ENCODE measurements at regions of chr2 and their contacts with region 1.

Region 1: DNA sequence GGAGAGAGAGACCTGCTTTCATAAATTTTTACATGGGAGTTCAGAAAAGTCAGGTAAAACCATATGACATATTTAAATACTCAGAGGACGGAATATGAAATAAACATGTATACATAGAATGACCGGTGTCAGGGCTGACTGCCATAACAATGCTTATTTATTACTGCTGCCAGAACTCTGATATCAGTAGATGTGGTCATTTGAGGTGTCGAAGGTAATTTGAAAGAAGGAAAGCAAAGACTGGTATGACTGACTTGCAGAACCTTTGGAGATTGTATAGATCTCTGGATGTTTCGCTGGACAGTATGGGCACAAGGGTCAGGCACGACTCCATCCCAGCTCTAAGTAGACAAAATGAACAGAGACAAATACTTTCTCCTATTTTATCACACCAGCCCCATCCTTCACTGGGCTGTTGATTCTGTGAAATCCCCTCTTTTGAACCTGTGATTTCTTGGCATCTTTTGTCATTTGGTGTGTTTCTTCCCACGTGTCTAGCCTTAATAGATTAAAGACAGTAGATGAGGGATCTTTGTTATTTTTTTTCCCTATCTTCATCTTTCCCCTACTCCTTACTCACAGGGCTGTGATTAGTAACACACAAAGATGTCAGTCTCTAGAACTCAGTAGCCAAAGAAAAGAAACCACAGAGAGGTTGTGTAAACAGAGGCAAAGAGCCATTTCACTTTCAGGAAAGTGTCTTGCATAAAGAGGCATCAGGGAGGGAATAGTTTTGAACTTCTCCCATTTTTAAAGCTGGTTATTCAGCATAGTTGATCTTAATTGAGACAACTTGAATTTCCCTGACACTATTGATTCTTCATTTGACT is 61.6 kb downstream of the ICOS start:
- DNase-seq: peak in 1 of 9 experiments; percentile 25
- ATAC-seq: no peak
- H3K4me3 ChIP-seq: no peak overlapping the region
- H3K4me3 Mint-ChIP-seq: no peak overlapping the region
- H3K27ac ChIP-seq: no peak overlapping the region
- H3K27ac Mint-ChIP-seq: no peak overlapping the region
- H3K4me1 ChIP-seq: peaks cover 25% of the 10 kb centered on the region
- H3K4me1 Mint-ChIP-seq: peaks cover 64% of the 10 kb centered on the region
- H3K27me3 ChIP-seq: no peaks in the 10 kb centered on the region
- H3K27me3 Mint-ChIP-seq: no peaks in the 10 kb centered on the region
- CTCF ChIP-seq: no peak

Region 2: DNA sequence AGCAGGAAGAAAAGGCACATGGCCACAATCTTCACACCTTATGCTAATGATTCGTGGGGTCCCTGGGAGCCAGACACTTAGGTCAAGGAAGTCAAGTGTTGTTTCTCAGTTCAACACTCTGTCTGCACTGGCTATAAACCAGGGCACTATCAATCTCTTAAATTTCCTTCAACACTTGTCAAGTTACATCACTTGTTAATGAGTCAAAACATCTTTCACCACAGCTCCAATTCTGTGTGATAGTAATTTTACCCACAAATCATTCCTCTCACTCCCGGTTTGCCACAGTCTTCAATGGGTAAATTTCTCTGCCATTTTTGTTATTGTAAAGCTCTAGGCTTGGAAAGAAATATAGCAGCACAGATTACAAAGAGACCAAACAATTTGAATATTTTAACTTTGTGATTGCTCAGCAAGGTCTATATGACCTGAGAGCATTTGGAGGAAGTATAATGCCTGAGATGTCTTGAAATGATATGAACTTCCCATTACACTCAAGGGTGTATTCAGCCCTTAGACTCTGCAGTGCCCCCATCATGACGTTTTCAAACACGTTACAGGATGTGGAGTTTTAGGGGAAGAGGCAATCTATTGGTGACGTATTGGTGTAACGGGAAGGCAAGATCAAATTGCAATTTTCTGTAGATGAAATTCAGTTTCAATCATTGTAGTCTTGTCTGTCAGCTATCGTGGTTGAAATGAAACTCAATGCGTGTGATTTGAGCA is 17.1 kb after region 1 on chr2:
- CTCF ChIA-PET with region 1: no interaction called
- POLR2A ChIA-PET with region 1: no interaction called
- intact Hi-C with region 1: loop called in 1 of 2 experiments (anchors 2 kb)
- DNase-seq: peak in 2 of 9 experiments; percentile 23 to 60
- ATAC-seq: peak; percentile 72
- H3K4me3 ChIP-seq: no peak overlapping the region
- H3K4me3 Mint-ChIP-seq: no peak overlapping the region
- H3K27ac ChIP-seq: no peak overlapping the region
- H3K27ac Mint-ChIP-seq: no peak overlapping the region
- H3K4me1 ChIP-seq: no peaks in the 10 kb centered on the region
- H3K4me1 Mint-ChIP-seq: peaks cover 6% of the 10 kb centered on the region
- H3K27me3 ChIP-seq: peaks cover 0 to 3% of the 10 kb centered on the region in 2 experiments
- H3K27me3 Mint-ChIP-seq: no peaks in the 10 kb centered on the region
- CTCF ChIP-seq: no peak